ENCODE measurements at regions of chr22 and their contacts with region 1.

Region 1: GRCh38 chr22:33314316-33314715 is 256.1 kb upstream of the SYN3 start:
- DNase-seq: no peak
- H3K4me3 ChIP-seq: no peak overlapping the region
- H3K27ac ChIP-seq: no peak overlapping the region
- H3K4me1 ChIP-seq: no peaks in the 10 kb centered on the region
- H3K27me3 ChIP-seq: no peaks in the 10 kb centered on the region
- CTCF ChIP-seq: no peak
- EP300 ChIP-seq: no peak
- POLR2A ChIP-seq: no peak

Region 2: GRCh38 chr22:33116872-33117547 is 197.3 kb before region 1 on chr22:
- intact Hi-C with region 1: no loop called
- DNase-seq: no peak
- H3K4me3 ChIP-seq: no peak overlapping the region
- H3K27ac ChIP-seq: no peak overlapping the region
- H3K4me1 ChIP-seq: no peaks in the 10 kb centered on the region
- H3K27me3 ChIP-seq: no peaks in the 10 kb centered on the region
- CTCF ChIP-seq: no peak
- EP300 ChIP-seq: no peak
- POLR2A ChIP-seq: no peak

Region 3: DNA sequence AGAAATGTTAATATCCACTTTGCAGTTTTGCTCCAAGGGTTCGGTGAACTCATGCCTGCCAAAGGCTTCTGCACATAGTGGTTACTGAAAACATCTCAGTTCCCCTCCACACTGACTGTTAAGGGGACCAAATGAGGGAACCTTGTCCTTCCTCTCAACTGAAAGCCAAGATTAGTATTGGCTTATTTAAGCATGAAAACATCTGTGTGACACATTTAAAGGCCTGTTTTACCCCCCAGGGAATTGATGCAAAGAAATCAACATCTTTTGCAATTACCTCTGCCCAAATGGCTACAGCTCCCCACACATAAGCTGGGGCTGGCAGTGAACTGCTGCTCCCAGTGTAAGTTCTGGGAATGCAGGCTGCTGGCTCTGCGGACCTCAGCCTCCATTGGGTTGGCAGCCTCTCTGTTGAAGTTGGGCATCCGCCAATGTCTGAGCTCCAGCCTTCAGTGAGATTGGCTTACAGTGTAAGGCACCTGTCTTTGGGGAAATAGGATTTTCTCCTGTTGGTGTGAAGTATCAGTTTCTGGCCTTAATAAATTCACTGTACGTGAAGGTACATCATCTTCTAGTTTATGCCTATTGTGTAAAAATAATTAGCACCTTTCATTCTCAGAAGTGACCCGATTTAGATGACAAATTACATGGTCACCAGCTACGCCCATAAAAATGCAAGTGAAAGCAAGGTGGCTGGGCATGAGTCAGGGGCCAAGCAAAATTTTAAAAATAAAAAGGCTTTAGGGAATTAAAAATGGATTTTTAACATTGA is 42.7 kb before region 1 on chr22:
- intact Hi-C with region 1: no loop called
- DNase-seq: peak; percentile 42 to 87
- H3K4me3 ChIP-seq: no peak overlapping the region
- H3K27ac ChIP-seq: peak overlapping the region in 2 of 5 donors; percentile 33 to 35
- H3K4me1 ChIP-seq: peaks cover 0 to 32% (median 15%) of the 10 kb centered on the region in 4 donors
- H3K27me3 ChIP-seq: no peaks in the 10 kb centered on the region
- CTCF ChIP-seq: no peak
- EP300 ChIP-seq: no peak
- POLR2A ChIP-seq: no peak

Region 4: DNA sequence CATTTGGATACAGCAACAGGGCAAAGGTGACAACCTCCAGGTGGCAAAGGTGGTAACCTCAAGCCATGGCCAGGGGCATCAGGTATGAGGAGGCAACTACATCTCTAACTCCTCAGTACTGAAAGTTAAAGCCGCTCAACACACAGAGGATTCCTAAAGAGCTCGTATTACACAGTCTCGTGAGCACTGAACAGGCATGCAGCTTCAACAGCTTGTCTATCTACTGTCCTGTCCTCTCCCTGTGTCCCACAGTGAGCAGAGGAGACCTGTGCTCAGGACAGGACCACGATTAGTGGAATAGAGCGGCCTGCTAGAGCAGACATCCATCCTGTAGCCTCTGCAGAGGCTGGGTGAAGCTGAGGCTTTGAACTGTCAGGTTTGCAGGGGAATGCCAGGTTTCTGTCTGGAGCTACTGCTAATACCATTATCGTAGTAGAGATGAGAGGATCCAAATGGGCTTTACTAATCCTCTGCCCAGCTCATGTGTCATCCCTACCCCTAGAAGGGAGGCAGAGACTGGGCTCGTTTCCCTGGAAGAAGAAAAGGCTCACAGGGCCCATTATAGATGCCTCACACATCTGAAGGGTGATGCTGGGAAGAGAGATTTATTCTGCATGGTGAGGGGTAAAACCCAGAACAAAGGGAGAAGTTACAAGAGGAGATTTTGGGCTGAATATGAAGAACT is 190.8 kb after region 1 on chr22:
- intact Hi-C with region 1: loop called (anchors 10 kb)
- DNase-seq: no peak
- H3K4me3 ChIP-seq: no peak overlapping the region
- H3K27ac ChIP-seq: no peak overlapping the region
- H3K4me1 ChIP-seq: peaks cover 0 to 10% (median 0%) of the 10 kb centered on the region in 4 donors
- H3K27me3 ChIP-seq: no peaks in the 10 kb centered on the region
- CTCF ChIP-seq: no peak
- EP300 ChIP-seq: no peak
- POLR2A ChIP-seq: no peak